Common myeloid progenitor, CD34-positive (primary cell): ENCODE measurements at regions of chr17 and their contacts with region 1.

Region 1: DNA sequence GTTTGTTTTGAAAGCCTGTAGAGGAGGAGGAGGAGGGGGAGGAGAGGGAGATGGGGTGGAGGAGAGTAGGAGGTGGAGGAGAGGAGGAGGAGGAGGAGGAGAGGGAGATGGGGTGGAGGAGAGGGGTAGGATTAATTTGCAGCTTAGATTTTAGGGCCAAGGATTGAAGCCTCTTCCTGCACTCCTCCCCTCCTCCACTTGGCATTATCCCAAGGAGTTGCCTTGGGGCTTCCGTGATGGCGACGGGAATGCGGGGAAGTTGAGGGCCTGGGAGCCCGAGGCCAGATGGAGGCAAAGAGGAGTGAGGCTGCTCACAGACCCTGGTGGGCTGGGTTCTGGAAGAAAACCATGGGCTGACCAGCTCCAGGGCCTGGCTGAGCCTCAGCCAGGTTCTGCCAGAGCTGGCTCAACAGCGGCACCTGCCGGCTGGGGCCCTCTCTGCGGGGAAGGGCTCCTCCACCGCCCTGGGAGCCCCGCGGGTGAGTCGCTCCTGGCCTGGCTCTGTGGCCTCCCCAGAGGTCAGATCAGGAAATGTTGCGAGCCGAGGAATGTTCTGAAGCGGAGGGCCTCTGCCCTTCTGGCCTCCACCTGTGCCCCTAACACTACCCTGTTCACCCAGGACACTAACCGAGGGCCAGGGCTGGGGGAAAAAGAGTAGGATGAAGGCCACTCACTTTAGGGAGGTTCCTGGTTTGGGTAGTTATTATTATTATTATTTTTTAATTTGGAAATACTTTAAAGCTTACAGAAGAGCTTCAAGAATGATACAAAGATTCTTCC is 23.9 kb upstream of the FMNL1 start:
- DNase-seq: peak; percentile 85 to 87 (median 87)
- H3K4me3 ChIP-seq: peak overlapping the region in 3 of 7 experiments; percentile 2 to 34 (median 16)
- H3K27ac ChIP-seq: no peak overlapping the region
- H3K4me1 ChIP-seq: peaks cover 0 to 20% (median 10%) of the 10 kb centered on the region in 4 experiments
- H3K27me3 ChIP-seq: no peaks in the 10 kb centered on the region

Region 2: DNA sequence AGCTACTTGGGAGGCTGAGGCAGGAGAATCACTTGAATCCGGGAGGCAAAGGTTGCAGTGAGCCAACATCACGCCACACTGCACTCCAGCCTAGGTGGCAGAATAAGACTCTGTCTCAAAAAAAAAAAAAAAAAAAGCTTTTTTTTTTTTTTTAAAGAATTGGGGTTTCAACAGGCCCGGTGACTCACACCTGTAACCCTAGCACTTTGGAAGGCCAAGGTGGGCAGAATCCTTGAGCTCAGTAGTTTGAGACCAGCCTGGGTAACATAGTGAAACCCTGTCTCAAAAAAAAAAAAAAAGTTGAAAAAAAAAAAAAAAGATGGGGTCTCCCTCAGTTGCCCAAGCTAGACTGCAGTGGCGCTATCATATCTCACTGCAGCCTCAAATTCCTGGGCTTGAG is 42.7 kb before region 1 on chr17:
- CTCF ChIA-PET with region 1: interaction called, 99 read pairs
- POLR2A ChIA-PET with region 1: no interaction called
- DNase-seq: peak in 1 of 3 donors; percentile 38
- H3K4me3 ChIP-seq: no peak overlapping the region
- H3K27ac ChIP-seq: no peak overlapping the region
- H3K4me1 ChIP-seq: peaks cover 23 to 51% (median 42%) of the 10 kb centered on the region in 4 experiments
- H3K27me3 ChIP-seq: no peaks in the 10 kb centered on the region

Region 3: DNA sequence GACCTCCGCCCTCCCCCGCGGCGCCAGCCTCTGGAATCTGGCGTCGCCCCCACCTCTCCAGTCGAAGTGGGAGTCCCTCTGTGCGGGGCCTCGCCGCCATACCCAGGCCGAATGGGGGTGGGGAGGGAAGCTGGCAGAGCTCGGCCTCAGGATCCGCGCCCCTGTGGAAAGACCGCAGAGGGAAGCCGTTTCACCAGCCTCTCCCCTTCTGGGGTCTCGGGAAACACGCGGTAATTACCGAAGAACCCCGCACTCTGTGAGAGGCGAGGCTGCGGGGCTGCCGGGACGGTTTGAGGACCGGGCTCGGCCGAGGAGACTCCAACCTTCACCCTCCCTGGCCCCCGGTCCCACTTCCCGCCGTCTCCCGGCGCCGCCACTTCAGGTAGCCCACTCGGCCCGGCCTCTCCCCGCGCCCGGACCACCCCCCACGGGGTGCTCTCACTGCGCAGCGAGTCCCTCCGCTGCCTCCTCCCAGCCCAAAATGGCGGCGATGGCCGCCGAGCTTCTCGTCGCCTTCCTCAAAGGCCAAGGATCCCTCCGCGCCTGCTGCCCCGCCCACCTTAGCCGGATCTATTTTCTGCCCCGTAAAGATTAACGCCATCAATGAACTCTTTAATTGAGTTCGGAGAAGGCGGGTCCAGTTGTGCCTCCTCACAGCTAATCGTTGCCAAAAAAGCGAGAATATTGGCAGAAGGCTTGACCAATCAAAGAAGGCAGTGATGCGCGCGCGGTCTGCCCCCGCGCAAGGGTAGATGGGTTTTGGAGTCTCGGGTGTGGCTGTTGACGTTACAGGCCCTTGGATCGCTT is 36.5 kb before region 1 on chr17:
- CTCF ChIA-PET with region 1: interaction called, 27 read pairs
- POLR2A ChIA-PET with region 1: interaction called, 3 read pairs
- DNase-seq: peak; percentile 100
- H3K4me3 ChIP-seq: peak overlapping the region; percentile 86 to 97 (median 96)
- H3K27ac ChIP-seq: peak overlapping the region; percentile 98 to 99
- H3K4me1 ChIP-seq: peaks cover 13 to 53% (median 45%) of the 10 kb centered on the region in 4 experiments
- H3K27me3 ChIP-seq: no peaks in the 10 kb centered on the region

Region 4: DNA sequence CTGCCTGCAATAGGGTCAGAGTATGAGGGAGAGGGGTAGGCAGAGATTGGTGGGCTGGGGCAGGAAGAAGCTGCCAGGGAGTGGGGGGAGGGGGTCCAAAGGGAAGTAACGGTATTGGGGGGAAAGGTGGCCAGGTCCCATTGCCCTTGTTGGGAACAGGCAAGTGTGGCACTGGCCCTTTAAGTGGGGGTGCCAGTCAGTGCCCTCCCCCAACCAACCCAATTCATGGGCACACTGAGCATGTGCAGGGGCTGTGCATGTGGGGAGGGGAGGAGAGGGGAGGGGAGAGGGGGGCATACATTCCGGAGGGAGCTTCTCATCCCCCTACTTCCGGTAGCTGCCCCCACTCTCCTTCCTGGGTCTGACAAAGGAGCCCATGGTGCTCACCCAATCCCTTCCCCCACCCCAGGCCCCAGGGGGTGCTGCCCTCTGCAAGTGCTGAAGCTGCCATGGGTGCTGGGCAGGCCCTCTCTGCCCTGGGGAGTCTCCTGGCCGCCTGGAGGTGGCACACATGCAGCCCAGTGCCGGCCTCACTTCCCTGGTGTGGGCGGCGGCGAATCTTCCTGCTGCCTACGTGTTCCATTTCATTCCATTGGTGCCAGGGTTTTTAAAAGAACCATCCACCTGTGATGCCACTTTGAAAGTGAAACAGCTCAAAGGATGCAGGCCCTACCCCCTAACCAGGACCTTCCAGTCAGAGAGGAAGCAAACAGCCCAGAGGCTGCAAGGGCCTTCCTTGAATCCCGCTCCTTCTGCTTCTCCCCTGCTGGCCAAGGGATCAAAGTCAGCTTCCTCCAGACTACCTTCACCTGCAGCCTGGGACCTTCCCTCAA is 25.1 kb before region 1 on chr17:
- CTCF ChIA-PET with region 1: interaction called, 12 read pairs
- POLR2A ChIA-PET with region 1: no interaction called
- DNase-seq: peak; percentile 36 to 73 (median 65)
- H3K4me3 ChIP-seq: peak overlapping the region; percentile 20 to 71 (median 56)
- H3K27ac ChIP-seq: peak overlapping the region in 1 of 2 experiments; percentile 25
- H3K4me1 ChIP-seq: peaks cover 0 to 44% (median 40%) of the 10 kb centered on the region in 4 experiments
- H3K27me3 ChIP-seq: no peaks in the 10 kb centered on the region

Region 5: DNA sequence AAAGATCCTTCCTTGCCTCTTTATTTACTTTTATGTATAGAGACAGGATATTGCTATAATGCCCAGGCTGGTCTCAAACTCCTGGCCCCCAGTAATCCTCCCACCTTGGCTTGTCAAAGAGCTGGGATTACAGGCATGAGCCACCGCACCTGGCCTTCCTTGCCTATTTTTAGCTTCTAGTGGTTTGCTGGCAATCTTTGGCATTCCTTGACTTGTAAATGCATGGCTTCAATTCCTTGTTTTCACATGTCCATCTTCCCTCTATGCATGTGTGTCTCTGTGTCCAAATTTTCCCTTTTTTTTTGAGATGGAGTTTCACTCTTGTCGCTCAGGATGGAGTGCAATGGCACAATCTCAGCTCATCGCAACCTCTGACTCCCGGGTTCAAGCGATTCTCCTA is 13.6 kb before region 1 on chr17:
- CTCF ChIA-PET with region 1: interaction called, 14 read pairs
- POLR2A ChIA-PET with region 1: no interaction called
- DNase-seq: no peak
- H3K4me3 ChIP-seq: no peak overlapping the region
- H3K27ac ChIP-seq: no peak overlapping the region
- H3K4me1 ChIP-seq: peaks cover 0 to 2% (median under 1%) of the 10 kb centered on the region in 4 experiments
- H3K27me3 ChIP-seq: no peaks in the 10 kb centered on the region

Region 6: GRCh38 chr17:45293413-45294211 is 95.9 kb after region 1 on chr17:
- CTCF ChIA-PET with region 1: no interaction called
- POLR2A ChIA-PET with region 1: no interaction called
- DNase-seq: peak in 2 of 3 donors; percentile 42 to 59
- H3K4me3 ChIP-seq: no peak overlapping the region
- H3K27ac ChIP-seq: no peak overlapping the region
- H3K4me1 ChIP-seq: peaks cover 17 to 82% (median 55%) of the 10 kb centered on the region in 4 experiments
- H3K27me3 ChIP-seq: no peaks in the 10 kb centered on the region